Calu3 (cell line): ENCODE measurements at regions of chr16 and their contacts with region 1.

Region 1: DNA sequence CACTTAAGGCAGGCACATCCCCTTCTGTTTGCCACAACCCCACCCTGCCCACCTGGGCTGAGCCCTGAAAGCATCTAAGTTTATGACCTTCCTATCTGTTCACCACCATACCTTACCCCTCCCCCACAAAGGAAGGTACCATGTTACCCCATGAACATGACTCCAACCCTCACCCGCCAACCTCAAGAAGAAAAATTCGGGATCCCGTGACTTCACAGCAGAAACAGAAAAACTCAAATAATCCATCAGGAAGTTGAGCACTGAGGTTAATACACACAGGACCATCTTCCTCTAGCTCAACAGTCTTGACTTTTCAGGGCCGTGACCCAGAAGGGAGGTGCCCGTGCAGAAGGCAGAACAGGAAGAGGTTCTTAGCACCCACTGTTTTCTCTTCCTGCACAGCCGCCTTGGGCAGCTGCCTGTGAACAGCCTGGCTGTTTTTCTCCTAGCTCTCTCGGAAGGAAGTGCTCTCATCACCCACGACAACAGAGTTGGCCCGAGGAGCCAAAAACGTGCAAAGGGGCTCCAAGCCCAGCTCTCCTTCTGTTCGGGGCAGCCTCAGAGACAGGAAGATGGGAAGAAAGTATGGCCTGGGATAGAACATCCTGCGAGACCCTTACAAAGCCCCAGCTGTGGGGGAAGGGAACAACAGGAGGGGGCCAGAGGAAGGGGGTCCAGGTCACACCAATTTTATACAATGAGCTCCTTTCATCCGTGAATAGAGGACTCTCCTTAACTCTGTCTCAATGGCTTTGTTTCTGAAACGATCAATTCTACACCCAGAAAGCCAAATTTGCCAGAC is 101.1 kb downstream of the XYLT1 start:
- DNase-seq: no peak
- H3K4me3 Mint-ChIP-seq: no peak overlapping the region
- H3K27ac Mint-ChIP-seq: no peak overlapping the region
- H3K4me1 Mint-ChIP-seq: peaks cover 22% of the 10 kb centered on the region
- H3K27me3 Mint-ChIP-seq: no peaks in the 10 kb centered on the region
- CTCF ChIP-seq: no peak

Region 2: GRCh38 chr16:17211797-17212196 is 157.8 kb before region 1 on chr16:
- CTCF ChIA-PET with region 1: no interaction called
- intact Hi-C with region 1: loop called (anchors 10 kb)
- DNase-seq: peak; percentile 58
- H3K4me3 Mint-ChIP-seq: no peak overlapping the region
- H3K27ac Mint-ChIP-seq: no peak overlapping the region
- H3K4me1 Mint-ChIP-seq: no peaks in the 10 kb centered on the region
- H3K27me3 Mint-ChIP-seq: no peaks in the 10 kb centered on the region
- CTCF ChIP-seq: peak; percentile 68

Region 3: GRCh38 chr16:17346621-17347569 is 22.7 kb before region 1 on chr16:
- CTCF ChIA-PET with region 1: no interaction called
- intact Hi-C with region 1: no loop called
- DNase-seq: no peak
- H3K4me3 Mint-ChIP-seq: no peak overlapping the region
- H3K27ac Mint-ChIP-seq: no peak overlapping the region
- H3K4me1 Mint-ChIP-seq: peaks cover 4% of the 10 kb centered on the region
- H3K27me3 Mint-ChIP-seq: no peaks in the 10 kb centered on the region
- CTCF ChIP-seq: no peak